Activated CD4-positive, alpha-beta T cell treated with anti-CD3 and anti-CD28 coated beads, Interleukin-2, amount 10 ng/mL, durations not matched to agents 24 days and 14 days (primary cell): ENCODE measurements at regions of chr11 and their contacts with region 1.

Region 1: GRCh38 chr11:36339888-36340287 is 43.8 kb downstream of the PRR5L start:
- DNase-seq: no peak
- H3K4me3 Mint-ChIP-seq: no peak overlapping the region
- H3K27ac Mint-ChIP-seq: no peak overlapping the region
- H3K4me1 Mint-ChIP-seq: peaks cover 16% of the 10 kb centered on the region
- H3K27me3 Mint-ChIP-seq: peaks cover 34% of the 10 kb centered on the region

Region 2: GRCh38 chr11:36328956-36329673 is 10.8 kb before region 1 on chr11:
- intact Hi-C with region 1: loop called (anchors 2 kb)
- DNase-seq: no peak
- H3K4me3 Mint-ChIP-seq: no peak overlapping the region
- H3K27ac Mint-ChIP-seq: no peak overlapping the region
- H3K4me1 Mint-ChIP-seq: peaks cover 6% of the 10 kb centered on the region
- H3K27me3 Mint-ChIP-seq: peaks cover 29% of the 10 kb centered on the region